ENCODE measurements at regions of chr17 and their contacts with region 1.

Region 1: DNA sequence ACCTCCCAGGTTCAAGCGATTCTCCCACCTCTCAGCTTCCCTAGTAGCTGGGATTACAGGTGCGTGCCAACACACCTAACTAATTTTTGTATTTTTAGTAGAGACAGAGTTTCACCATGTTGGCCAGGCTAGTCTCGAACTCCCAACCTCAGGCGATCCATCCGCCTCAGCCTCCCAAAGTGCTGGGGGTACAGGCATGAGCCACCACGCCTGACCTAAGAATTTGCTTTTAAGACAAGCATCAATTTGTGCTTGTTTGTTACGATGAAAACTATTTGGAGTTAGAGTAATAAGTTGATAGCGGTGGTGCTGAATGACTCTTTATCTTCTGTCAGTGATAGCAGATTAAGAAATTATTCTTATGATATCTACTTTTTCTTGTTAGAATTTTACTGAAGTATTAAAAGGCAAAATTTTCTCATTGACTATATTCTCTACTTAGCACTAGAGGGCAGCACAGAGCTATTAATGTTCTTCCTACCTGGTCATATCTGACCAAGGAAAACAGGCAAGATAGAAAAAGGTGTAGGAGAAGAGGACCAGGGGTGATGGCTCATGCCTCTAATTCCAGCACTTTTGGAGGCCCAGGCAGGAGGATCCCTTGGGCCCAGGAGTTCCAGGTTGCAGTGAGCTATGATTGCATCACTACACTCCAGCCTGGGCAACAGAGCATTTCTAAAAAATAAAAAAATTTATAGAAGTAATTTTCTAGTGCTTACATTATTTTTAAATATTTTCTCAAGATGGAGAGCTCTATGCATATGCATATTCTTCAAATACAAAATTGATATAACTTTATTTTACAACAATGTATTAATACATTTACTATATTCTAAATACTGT is 24.5 kb downstream of the STXBP4 start:
- DNase-seq: peak; percentile 70
- H3K4me3 Mint-ChIP-seq: no peak overlapping the region
- H3K27ac Mint-ChIP-seq: no peak overlapping the region
- H3K4me1 Mint-ChIP-seq: no peaks in the 10 kb centered on the region
- H3K27me3 Mint-ChIP-seq: no peaks in the 10 kb centered on the region

Region 2: DNA sequence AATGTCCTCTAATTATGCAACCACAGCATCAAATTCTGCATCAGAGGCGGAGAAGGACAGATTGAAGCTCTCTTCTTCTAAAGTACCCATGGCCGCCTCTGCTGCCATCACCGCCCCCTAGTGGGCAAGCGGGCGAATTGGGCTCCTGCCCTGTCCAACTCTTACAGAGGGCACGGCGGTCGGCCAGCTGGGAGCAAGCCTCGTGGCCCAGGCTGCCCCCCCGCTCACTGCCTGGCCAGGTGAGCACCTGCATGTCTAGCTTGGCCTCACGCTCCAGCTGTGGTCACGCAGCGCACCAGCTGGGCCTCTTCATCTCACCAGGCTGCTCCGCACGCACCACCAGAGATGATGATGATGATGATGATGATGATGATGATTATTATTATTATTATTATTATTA is 238.5 kb before region 1 on chr17:
- intact Hi-C with region 1: no loop called
- DNase-seq: no peak
- H3K4me3 Mint-ChIP-seq: no peak overlapping the region
- H3K27ac Mint-ChIP-seq: no peak overlapping the region
- H3K4me1 Mint-ChIP-seq: no peaks in the 10 kb centered on the region
- H3K27me3 Mint-ChIP-seq: no peaks in the 10 kb centered on the region

Region 3: GRCh38 chr17:55295411-55296170 is 302.6 kb after region 1 on chr17:
- intact Hi-C with region 1: loop called (anchors 1 kb)
- DNase-seq: peak; percentile 87
- H3K4me3 Mint-ChIP-seq: no peak overlapping the region
- H3K27ac Mint-ChIP-seq: no peak overlapping the region
- H3K4me1 Mint-ChIP-seq: no peaks in the 10 kb centered on the region
- H3K27me3 Mint-ChIP-seq: peaks cover 4% of the 10 kb centered on the region

Region 4: DNA sequence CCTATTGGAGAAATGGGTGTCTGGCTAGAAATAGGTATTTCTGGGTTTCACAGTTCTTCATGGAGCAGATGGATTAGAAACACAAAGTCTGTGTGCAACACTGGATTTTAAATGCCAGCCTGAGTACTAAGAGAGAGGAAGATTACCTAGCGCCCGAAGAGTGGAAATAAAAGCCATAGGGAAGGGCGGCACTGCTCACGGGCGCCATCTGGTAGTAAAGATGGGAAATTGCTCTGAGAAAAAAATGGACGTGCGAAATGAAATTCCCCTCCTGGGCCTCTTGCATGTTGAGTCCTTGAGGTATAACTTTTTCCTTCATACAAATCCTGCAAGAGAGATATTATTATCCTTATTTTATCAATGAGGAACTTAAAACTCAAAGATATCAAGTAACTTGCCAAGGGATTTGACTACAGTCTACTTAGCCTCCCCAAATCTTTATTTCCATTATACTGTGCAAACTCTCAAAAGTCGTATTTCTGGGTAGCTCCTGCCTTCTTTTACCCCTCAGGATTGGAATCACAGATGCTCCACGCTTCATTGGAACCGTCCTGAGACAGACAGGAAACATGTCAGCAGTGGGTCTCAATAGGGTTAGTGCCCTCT is 355.8 kb after region 1 on chr17:
- intact Hi-C with region 1: loop called (anchors 1 kb)
- DNase-seq: peak; percentile 83
- H3K4me3 Mint-ChIP-seq: no peak overlapping the region
- H3K27ac Mint-ChIP-seq: no peak overlapping the region
- H3K4me1 Mint-ChIP-seq: peaks cover 42% of the 10 kb centered on the region
- H3K27me3 Mint-ChIP-seq: peaks cover 2% of the 10 kb centered on the region

Region 5: DNA sequence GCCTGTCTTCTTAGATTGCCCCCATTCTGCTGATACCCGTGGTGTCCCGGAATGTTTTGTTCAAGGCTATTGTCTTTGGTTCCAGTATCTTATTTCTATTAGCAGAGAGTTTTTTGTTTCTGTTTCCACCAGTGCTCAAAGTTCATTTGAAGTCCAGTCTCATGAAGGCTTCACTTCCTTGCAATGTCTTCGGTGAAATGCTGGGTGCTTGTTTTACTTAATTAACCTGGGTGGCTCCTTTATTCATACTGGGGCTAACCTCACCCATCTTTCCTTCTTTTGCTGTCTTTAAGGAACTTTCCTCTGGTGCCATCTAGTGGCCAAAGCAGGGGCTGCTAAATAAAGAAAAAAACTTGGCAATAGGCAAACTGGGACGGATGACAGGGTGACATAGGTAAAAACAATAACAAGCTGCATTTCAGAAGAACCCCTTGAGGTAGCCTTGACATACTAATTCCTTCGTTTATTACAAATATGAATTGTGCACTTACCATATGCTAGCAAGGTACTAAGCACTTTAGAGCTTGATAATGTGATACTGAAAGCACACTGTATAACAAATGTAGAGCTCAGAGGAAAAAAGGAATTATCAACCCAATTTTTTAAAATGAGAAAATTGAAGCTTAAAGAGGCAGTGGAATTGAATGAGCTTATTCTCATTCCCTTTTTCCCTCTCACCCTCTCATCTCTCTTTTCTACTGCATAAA is 521.0 kb after region 1 on chr17:
- intact Hi-C with region 1: loop called (anchors 5 kb)
- DNase-seq: peak; percentile 92
- H3K4me3 Mint-ChIP-seq: no peak overlapping the region
- H3K27ac Mint-ChIP-seq: no peak overlapping the region
- H3K4me1 Mint-ChIP-seq: peaks cover 3% of the 10 kb centered on the region
- H3K27me3 Mint-ChIP-seq: peaks cover 8% of the 10 kb centered on the region